ENCODE measurements at regions of chr10 and their contacts with region 1.

Region 1: DNA sequence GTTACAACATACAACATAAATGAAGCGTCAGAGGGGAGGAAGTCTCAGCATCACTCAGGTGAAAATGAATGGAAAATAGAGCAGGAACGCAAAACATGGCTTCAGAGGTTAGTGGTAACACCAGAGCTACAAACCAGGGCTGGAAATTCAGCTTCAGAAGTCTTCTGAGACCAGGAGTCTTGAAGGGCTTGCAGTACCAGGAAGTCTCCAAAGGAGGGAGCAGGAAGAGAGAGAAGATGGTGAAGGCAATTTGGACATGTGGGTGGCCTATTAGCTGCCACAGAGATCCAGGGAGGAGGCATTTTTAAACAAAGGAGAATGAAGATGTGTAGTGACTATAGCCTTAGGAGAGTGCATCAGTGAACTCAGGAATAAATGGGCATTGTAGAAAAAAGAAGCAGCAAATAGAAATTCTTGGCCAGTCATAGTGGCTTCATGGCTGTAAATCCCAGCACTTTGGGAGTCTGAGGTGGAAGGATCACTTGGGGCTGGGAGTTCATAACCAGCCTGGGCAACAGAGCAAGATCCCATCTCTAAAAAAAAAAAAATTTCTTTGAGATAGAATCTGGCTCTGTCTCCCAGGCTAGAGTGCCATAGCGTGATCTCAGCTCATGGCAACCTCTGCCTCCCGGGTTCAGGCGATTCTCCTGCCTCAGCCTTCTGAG is 9.3 kb upstream of the TET1 start:
- DNase-seq: no peak
- ATAC-seq: peak; percentile 78

Region 2: GRCh38 chr10:68121852-68122251 is 429.0 kb before region 1 on chr10:
- intact Hi-C with region 1: no loop called
- DNase-seq: no peak
- ATAC-seq: peak; percentile 33

Region 3: DNA sequence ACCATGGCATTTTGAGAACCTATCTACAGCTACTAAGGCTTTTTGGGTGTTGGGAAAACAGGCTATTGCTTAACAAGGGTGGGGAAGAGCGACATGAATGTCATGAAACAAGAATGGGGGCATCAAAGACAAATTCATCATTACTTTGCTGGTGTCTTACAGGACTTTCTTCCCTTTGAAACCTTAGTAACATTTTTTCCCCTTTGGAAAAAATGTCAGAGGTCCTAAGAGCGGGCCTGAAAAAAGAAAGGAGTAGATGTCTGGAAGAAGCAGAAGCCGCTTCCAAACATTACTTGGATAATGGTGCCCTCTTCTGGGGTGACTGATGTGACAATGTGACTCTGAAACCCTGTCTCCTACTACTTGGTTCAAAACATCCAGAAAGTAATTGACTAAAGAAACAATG is 346.5 kb after region 1 on chr10:
- intact Hi-C with region 1: loop called (anchors 10 kb)
- DNase-seq: no peak
- ATAC-seq: no peak

Measured in left ventricle myocardium superior (tissue), 1 donor.